ENCODE measurements at regions of chr18 and their contacts with region 1.

Region 1: DNA sequence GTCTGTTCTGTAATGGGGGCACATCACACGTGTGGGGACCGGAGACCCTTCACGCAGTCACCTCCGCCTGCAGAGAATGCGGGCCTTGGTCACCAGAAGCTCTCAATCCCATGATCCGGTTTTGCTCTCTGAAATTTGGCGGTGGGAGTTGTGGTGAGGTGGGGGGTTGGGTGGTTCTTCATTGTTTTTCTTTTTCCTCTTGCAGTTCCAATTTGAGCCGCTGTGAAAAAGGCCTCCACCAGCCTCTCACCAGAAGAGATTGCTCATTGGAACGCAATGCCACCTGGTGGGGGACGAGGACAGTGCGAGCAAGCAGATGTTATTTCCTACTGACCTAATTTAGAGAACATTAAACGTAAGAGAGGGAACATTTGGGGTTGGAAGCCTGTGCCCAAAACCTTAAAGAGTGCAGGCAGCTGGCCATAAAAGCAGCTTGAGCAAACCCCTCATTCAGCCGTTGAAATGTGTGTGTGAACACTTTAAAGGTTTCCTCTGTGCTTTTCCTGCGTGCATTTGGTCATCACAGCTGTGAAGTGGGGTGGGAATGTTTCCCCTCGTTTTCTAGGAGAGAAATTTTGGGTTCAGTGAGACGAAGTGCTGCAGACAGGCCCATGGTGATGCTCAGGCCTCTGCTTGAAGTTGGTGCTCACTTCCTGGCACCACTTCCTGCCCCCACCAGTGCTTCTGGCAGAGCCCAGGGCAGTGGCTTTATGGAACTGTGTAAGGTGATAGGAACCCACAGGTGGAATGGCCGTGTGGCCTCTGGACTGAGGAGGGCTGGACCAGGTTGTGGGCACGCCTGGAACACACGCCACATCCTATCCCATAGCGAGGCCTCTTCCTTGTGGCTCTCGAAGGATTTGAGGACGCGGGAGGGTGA is 61.7 kb downstream of the ZCCHC2 start:
- DNase-seq: peak; percentile 13
- H3K4me3 ChIP-seq: no peak overlapping the region
- H3K27me3 ChIP-seq: no peaks in the 10 kb centered on the region
- CTCF ChIP-seq: peak; percentile 98

Region 2: DNA sequence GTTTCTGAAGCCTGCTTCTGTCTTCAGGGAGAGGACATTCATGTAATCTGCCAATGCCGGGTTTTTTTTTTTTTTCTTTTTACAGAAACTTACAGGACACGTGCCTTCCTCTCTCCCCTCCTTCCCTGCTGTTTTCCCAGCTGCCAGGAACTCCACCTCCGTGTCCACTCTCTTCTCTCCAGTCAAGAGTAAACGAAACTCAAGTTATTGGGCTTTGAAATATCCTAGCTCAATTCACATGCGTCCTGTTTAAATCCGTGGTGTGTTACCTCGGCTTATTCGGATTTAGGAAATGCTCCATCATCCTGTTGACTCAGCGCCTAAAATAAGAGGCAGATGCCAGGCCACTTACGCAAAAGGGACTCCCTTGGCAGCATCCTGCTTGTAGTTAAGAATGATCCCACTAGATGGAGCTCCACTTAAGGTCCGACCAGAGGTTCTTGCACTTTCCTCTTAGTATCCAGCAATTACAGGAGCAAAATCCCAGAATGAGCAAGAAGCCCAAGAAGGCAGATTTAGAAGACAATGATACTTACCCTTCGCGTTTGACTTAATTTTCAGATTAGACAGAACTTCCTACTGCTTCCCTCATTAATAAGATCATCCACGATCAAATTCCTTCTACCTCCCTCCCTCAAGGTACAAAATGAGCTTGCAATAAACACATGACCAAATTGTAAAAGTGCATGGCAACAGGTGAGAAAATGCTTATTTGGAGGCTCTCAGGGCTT is 158.9 kb before region 1 on chr18:
- CTCF ChIA-PET with region 1: interaction called, 46 read pairs
- POLR2A ChIA-PET with region 1: no interaction called
- DNase-seq: peak; percentile 90
- H3K4me3 ChIP-seq: peak overlapping the region; percentile 28
- H3K27me3 ChIP-seq: 0 out of 2 replicates have a peak, but pooled peaks cover 1% of the 10 kb centered on the region
- CTCF ChIP-seq: peak; percentile 84

Region 3: DNA sequence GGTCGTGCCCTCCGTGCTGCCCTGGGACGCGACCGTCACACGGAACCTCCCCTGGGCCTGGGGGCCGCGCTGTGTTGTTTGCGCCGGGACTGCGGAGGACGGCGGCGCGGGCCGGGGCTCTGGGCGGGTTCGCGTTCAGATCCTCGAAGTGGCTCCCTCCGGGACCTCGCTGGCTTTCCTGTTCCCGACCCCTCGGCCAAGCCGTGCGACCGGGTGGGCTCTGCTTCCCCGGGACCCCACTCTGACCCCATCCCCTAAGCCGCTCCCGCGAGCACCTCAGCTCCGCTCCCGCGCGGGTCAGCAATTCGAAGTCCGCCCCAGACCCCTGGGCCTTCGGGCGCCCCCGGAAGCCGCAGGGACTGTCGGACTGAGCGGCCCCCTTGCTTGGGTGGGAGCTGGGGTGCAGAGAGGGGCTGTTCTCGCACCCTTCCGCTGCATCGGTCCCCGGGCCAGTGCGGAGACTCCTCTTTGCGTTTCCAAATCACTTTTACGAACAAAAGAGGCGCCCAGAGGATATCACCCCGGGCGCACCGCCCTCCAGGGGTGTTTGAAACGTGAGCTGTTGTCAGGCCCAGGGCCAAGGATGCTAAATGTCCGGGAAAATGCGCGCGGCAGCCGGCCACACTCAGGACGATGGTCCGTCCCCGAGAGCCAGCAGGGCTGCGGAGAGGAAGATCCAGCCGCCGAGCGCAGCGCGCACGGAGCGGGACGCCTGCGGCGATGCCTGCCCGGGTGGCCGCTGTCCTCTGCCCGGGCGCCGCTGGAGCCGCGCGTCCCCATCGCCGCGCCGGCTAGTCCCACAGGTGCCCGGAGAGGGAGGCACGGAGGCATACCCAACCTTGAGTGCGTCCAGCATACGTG is 11.9 kb after region 1 on chr18:
- CTCF ChIA-PET with region 1: interaction called, 18 read pairs
- POLR2A ChIA-PET with region 1: no interaction called
- DNase-seq: no peak
- H3K4me3 ChIP-seq: peak overlapping the region; percentile 25
- H3K27me3 ChIP-seq: peaks cover 14% of the 10 kb centered on the region
- CTCF ChIP-seq: no peak

Region 4: DNA sequence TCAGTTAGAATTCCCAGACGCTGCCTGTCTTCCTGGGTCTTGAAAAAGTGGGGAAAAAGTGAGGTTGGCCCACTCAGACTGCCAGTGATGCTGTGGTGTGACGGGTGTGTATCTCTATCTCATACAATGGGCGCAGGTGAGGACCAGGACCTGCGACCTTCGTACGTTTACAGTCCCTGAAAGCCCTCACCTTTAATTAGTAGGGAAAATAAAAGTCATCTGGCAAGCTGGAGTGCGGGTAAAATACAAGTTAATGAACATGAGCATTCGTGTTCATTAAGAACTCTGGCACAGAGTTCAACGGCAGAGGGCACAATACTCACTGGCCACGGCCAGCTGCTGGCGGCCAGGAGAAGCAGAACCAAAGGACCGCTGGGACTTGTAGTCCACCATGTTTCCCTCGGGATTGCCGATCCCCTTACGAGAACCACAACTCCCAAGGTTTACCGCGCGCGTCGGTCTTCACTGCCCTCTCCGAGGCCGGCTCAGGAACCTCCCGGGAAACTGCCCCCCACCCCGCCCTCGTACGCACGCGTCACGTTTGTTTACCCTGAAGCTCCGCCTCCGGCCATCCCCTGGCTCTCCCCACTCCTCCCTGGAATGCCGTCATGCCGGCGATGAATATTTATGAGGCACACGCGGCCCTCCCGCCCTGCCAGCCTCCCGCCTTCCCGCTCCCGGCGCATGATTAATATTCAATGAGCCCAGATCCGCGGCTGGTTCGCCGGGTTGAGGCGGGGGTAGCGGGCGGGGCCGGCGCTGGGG is 130.4 kb after region 1 on chr18:
- CTCF ChIA-PET with region 1: interaction called, 19 read pairs
- POLR2A ChIA-PET with region 1: no interaction called
- DNase-seq: peak; percentile 99
- H3K4me3 ChIP-seq: peak overlapping the region; percentile 77
- H3K27me3 ChIP-seq: no peaks in the 10 kb centered on the region
- CTCF ChIP-seq: peak; percentile 82

Region 5: DNA sequence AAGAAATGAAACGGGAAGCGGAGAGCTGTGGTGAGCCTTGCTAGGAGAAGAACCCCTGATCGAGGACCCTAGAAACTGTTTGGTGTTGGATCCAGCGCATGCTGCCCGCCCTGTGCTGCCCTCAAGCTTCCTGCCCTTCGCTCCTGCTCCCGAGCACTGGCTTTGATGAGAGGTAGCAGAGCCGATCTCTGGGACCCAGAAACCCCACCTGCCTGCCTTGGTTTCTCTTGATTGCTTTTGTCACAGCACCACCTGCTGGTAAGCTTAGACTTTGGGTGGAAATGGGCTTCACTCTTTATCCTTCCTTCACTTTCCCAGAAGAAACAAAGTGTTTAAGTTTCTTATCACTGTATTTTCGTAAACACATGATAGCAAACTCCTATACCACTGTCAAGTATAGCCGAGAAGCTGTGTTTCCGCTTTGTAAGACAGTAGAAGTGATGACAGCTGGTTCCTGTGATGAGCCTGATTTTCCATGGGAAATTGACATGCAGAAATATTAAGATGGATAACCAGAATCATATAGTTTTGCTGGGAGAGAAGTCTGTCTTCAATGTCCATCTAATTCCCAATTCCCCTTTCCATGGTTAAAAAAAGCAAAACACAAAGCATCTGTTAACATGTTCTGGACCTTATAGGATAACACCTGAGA is 398.2 kb after region 1 on chr18:
- CTCF ChIA-PET with region 1: interaction called, 131 read pairs
- POLR2A ChIA-PET with region 1: no interaction called
- DNase-seq: no peak
- H3K4me3 ChIP-seq: no peak overlapping the region
- H3K27me3 ChIP-seq: no peaks in the 10 kb centered on the region
- CTCF ChIP-seq: peak; percentile 74